ENCODE measurements at regions of chr19 and their contacts with region 1.

Region 1: DNA sequence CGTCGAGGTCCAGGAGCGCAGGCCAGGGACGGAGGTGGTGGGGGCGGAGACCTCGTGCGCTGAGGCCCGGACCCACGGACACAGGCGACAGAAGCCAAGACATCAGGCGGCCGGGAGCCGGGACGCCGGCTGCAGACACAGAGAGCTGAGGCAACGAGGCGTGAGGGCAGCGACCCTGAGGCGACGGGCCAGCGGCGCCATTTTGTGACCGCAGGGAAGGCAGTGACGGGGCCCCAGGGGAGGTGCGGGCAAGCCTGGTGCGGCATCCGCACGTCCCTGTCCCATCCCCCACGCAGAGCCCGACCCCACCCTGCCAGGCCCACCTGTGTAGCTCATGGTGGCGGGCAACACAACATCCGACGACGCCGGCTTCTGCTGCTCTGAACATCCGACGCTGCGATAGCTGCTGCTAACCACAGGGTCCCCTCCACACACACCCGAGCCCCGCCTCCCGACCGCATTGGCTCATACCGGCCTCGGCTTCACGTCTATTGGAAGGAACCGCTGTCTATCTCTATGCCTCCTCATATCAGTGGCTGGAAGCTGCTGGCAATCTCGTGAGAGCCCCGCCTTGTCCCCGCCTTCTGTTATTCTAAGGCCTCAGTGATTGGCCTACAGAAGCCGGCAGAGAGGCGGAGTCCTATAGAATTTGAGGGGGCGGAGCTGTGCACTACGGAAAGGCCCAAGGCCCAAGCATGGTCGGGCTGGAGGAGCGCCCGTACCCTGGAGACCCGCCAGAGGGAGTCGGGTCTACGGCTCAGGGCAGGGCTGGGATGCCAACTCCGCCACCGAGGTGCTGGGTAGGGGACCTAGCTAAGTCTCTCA is at the start of gene AKAP8L:
- DNase-seq: peak; percentile 96 to 99
- H3K4me3 ChIP-seq: peak within 1 kb of the TSS; percentile 85 to 98 (median 96)
- H3K27ac ChIP-seq: peak within 1 kb of the TSS; percentile 97
- H3K4me1 ChIP-seq: peaks cover 0 to 4% (median 3%) of the 10 kb centered on the region in 4 experiments; a peak in 5 of 7 replicates
- H3K27me3 ChIP-seq: no peaks in the 10 kb centered on the region
- CTCF ChIP-seq: peak; percentile 82 to 90 (median 89)
- EP300 ChIP-seq: peak in 1 of 2 experiments; percentile 11; a peak in 1 of 3 replicates
- POLR2A ChIP-seq: peak; percentile 93 to 98
- RAD21 ChIP-seq: peak; percentile 78 to 81
- total RNA-seq, gene AKAP8L: 127 and 138 TPM in 2 replicates

Region 2: DNA sequence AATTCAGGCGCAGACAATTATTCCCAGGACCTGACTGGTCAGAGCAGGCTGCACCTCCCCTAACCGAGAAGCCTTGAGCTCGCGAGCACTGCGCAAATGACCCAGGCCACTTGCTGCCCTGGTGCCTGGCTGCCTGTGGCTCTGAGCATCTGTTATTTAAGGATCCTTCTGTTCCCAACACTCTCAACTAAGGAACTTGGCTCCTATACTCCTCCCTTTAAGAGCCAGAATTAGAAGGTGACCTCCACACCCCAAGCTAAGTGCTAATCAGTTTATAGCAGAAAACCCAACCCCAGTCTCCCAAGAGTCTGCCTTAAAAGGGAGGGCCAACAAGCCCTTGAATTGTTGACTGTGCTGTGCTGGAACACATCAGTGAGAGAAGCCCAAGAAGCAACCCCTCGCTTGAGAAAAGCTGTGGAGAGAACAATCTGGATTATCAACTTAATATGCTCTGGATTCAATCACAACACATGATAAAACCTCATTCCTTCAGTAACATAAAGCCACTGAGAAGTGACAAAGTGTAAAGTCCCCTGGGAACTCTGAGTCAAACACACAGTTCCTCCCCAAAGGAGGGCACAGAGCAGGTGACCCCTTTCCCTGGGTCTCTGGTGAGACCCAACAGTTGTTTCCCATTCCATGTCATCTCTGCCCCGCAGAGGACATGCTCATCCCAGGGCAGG is 14.6 kb before region 1 on chr19:
- CTCF ChIA-PET with region 1: interaction called, 9 read pairs
- POLR2A ChIA-PET with region 1: interaction called, 35 read pairs
- DNase-seq: no peak
- H3K4me3 ChIP-seq: no peak overlapping the region
- H3K27ac ChIP-seq: no peak overlapping the region
- H3K4me1 ChIP-seq: no peaks in the 10 kb centered on the region
- H3K27me3 ChIP-seq: no peaks in the 10 kb centered on the region
- CTCF ChIP-seq: no peak
- EP300 ChIP-seq: no peak
- POLR2A ChIP-seq: no peak
- RAD21 ChIP-seq: no peak

Region 3: GRCh38 chr19:15432629-15433518 is 14.1 kb after region 1 on chr19:
- CTCF ChIA-PET with region 1: interaction called, 48 read pairs
- POLR2A ChIA-PET with region 1: interaction called, 71 read pairs
- DNase-seq: peak in 1 of 2 experiments; percentile 94
- H3K4me3 ChIP-seq: peak overlapping the region; percentile 64 to 80 (median 80)
- H3K27ac ChIP-seq: no peak overlapping the region
- H3K4me1 ChIP-seq: peaks cover 0 to 13% (median 8%) of the 10 kb centered on the region in 4 experiments; a peak in 6 of 7 replicates
- H3K27me3 ChIP-seq: no peaks in the 10 kb centered on the region; a peak in 1 of 7 replicates
- CTCF ChIP-seq: no peak
- EP300 ChIP-seq: peak in 1 of 2 experiments; percentile 90; a peak in 2 of 3 replicates
- POLR2A ChIP-seq: peak in 1 of 2 experiments; percentile 76; a peak in 2 of 3 replicates
- RAD21 ChIP-seq: peak in 1 of 2 experiments; percentile 13; a peak in 1 of 4 replicates

Region 4: DNA sequence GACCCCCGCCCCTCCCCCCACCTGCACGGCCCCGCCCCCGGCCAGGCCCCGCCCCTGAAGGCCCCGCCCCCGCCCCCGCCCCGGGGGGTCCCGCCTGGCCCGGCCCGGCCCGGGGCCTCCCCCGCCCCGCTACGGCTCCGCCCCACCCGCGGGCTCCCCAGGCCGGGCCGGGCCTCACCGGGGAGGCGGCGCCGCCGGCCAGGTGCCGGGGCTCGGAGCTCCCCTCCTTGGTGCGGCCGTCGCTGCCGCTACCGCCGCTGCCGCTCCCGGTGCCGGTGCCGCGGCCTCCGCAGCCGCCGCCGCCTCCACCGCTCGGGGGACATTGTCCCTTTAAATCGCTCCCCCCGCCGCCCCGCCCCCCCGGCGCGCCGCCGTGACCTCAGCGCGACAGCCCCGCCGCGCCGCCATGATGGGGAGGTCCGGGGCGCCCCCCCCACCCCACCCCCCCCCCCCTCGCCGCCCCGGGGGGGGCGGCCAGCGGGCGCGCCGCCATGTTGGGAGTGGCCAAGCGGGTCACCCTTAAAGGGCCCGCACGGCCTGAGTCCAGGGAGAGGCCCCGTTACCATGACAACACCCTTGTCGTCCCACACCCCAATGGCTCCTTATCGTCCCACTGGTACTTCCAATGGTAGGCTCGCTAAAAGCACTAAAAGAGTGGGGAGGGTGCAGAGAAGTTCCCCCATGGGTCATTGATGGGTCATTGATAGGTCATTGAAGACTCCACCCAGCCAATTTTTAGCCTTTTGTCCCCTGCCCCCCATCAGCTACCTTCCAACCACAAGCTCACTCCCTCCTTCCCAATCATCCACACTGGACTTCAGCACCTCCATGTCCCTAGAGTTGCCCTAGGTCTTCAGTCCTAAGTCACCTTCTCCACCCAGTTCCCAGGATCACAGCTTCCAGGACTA is 31.1 kb after region 1 on chr19 and contains the start of gene WIZ:
- CTCF ChIA-PET with region 1: interaction called, 35 read pairs
- POLR2A ChIA-PET with region 1: interaction called, 10 read pairs
- DNase-seq: peak in 1 of 2 experiments; percentile 85
- H3K4me3 ChIP-seq: peak within 1 kb of the TSS; percentile 43 to 93 (median 50)
- H3K27ac ChIP-seq: 0 out of 2 replicates have a peak within 1 kb of the TSS, but pooled peaks have one; percentile 3
- H3K4me1 ChIP-seq: peaks cover 0 to 14% (median 5%) of the 10 kb centered on the region in 4 experiments; a peak in 6 of 7 replicates
- H3K27me3 ChIP-seq: peaks cover 3 to 22% (median 17%) of the 10 kb centered on the region in 4 experiments; a peak in 6 of 7 replicates
- CTCF ChIP-seq: no peak
- EP300 ChIP-seq: no peak
- POLR2A ChIP-seq: no peak
- RAD21 ChIP-seq: no peak
- total RNA-seq, gene WIZ: 33.2 and 34.4 TPM in 2 replicates

Region 5: GRCh38 chr19:15479391-15480345 is 60.9 kb after region 1 on chr19 and contains the start of gene PGLYRP2:
- CTCF ChIA-PET with region 1: no interaction called
- POLR2A ChIA-PET with region 1: no interaction called
- DNase-seq: no peak
- H3K4me3 ChIP-seq: no peak within 1 kb of the TSS
- H3K27ac ChIP-seq: no peak within 1 kb of the TSS
- H3K4me1 ChIP-seq: no peaks in the 10 kb centered on the region
- H3K27me3 ChIP-seq: no peaks in the 10 kb centered on the region
- CTCF ChIP-seq: no peak
- EP300 ChIP-seq: no peak
- POLR2A ChIP-seq: no peak
- RAD21 ChIP-seq: no peak
- total RNA-seq, gene PGLYRP2: not detected in 2 replicates

Region 6: DNA sequence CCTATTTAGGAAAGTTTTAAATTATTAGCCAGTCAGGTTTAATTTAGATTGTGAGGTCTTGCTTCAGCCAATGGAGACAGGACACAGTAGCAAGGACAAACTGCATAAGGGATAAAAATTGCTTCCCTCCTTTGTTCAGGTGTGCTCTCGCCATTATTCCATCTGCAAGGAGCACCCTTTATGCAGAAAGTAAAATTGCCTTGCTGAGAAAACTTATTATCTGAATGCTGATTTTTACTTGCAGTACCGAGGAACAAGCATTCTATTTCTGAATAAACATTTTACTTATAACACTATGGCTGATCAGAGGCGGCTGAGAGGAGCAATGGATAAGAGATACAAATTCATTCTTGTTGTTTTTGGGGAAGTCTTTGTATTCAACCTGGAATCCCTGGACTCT is 97.6 kb after region 1 on chr19:
- CTCF ChIA-PET with region 1: no interaction called
- POLR2A ChIA-PET with region 1: no interaction called
- DNase-seq: no peak
- H3K4me3 ChIP-seq: no peak overlapping the region
- H3K27ac ChIP-seq: no peak overlapping the region
- H3K4me1 ChIP-seq: no peaks in the 10 kb centered on the region
- H3K27me3 ChIP-seq: no peaks in the 10 kb centered on the region
- CTCF ChIP-seq: no peak
- EP300 ChIP-seq: no peak
- POLR2A ChIP-seq: no peak
- RAD21 ChIP-seq: no peak

Region 7: GRCh38 chr19:15555759-15556633 is 137.2 kb after region 1 on chr19:
- CTCF ChIA-PET with region 1: interaction called, 18 read pairs
- POLR2A ChIA-PET with region 1: interaction called, 4 read pairs
- DNase-seq: peak; percentile 77 to 99
- H3K4me3 ChIP-seq: peak overlapping the region in 3 of 4 experiments; percentile 33 to 48 (median 37); a peak in 5 of 8 replicates
- H3K27ac ChIP-seq: no peak overlapping the region
- H3K4me1 ChIP-seq: no peaks in the 10 kb centered on the region
- H3K27me3 ChIP-seq: peaks cover 0 to 2% (median 0%) of the 10 kb centered on the region in 4 experiments; a peak in 2 of 7 replicates
- CTCF ChIP-seq: peak; percentile 80 to 91 (median 86)
- EP300 ChIP-seq: no peak
- POLR2A ChIP-seq: no peak
- RAD21 ChIP-seq: peak; percentile 88 to 89

Region 8: DNA sequence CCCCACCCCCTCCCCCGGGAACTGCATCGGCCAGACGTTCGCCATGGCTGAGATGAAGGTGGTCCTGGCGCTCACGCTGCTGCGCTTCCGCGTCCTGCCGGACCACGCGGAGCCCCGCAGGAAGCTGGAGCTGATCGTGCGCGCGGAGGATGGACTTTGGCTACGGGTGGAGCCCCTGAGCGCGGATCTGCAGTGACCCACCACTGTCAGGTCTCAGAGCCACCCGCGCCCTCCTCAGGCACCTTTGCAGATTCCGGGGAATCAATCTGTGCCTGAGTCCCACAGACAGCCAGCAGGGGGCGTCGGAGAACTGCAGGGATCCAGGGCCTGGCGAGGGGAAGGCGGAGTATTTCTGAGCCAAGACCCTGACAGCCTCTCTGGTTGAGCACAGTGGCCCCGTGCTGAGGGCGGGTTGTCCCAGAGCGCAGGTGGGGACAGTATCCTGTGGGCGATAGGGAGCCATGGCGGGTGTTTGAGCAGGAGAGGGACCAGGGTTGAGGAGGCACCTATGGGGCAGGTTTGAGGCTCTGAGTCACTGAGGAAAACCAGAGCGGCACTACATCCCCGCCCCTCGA is 165.8 kb after region 1 on chr19:
- CTCF ChIA-PET with region 1: no interaction called
- POLR2A ChIA-PET with region 1: no interaction called
- DNase-seq: peak; percentile 15 to 91
- H3K4me3 ChIP-seq: no peak overlapping the region
- H3K27ac ChIP-seq: no peak overlapping the region
- H3K4me1 ChIP-seq: no peaks in the 10 kb centered on the region
- H3K27me3 ChIP-seq: no peaks in the 10 kb centered on the region
- CTCF ChIP-seq: peak; percentile 84 to 93 (median 86)
- EP300 ChIP-seq: no peak
- POLR2A ChIP-seq: no peak
- RAD21 ChIP-seq: peak; percentile 75 to 81